Esophagus squamous epithelium (tissue), 5 donors: ENCODE measurements at regions of chr12 and their contacts with region 1.

Region 1: GRCh38 chr12:127293507-127294310 is 973.3 kb upstream of the TMEM132C start:
- DNase-seq: no peak
- H3K4me3 ChIP-seq: no peak overlapping the region
- H3K27ac ChIP-seq: no peak overlapping the region
- H3K4me1 ChIP-seq: no peaks in the 10 kb centered on the region
- H3K27me3 ChIP-seq: no peaks in the 10 kb centered on the region
- CTCF ChIP-seq: peak in 5 of 6 experiments; percentile 50 to 81 (median 59)
- POLR2A ChIP-seq: no peak

Region 2: GRCh38 chr12:127108360-127109215 is 185.1 kb before region 1 on chr12:
- intact Hi-C with region 1: loop called (anchors 10 kb)
- DNase-seq: no peak
- H3K4me3 ChIP-seq: no peak overlapping the region
- H3K27ac ChIP-seq: no peak overlapping the region
- H3K4me1 ChIP-seq: peaks cover 0 to 16% (median 0%) of the 10 kb centered on the region in 3 donors
- H3K27me3 ChIP-seq: peaks cover 0 to 18% (median 0%) of the 10 kb centered on the region in 4 donors
- CTCF ChIP-seq: peak; percentile 37 to 79 (median 64)
- POLR2A ChIP-seq: no peak

Region 3: GRCh38 chr12:127334912-127335644 is 41.4 kb after region 1 on chr12:
- intact Hi-C with region 1: no loop called
- DNase-seq: no peak
- H3K4me3 ChIP-seq: no peak overlapping the region
- H3K27ac ChIP-seq: no peak overlapping the region
- H3K4me1 ChIP-seq: no peaks in the 10 kb centered on the region
- H3K27me3 ChIP-seq: no peaks in the 10 kb centered on the region
- CTCF ChIP-seq: no peak
- POLR2A ChIP-seq: no peak

Region 4: GRCh38 chr12:127411166-127411915 is 117.6 kb after region 1 on chr12:
- intact Hi-C with region 1: no loop called
- DNase-seq: no peak
- H3K4me3 ChIP-seq: no peak overlapping the region
- H3K27ac ChIP-seq: no peak overlapping the region
- H3K4me1 ChIP-seq: no peaks in the 10 kb centered on the region
- H3K27me3 ChIP-seq: no peaks in the 10 kb centered on the region
- CTCF ChIP-seq: no peak
- POLR2A ChIP-seq: no peak